Calu3 (cell line): ENCODE measurements at regions of chr7 and their contacts with region 1.

Region 1: GRCh38 chr7:14717816-14718215 is 184.7 kb downstream of the DGKB start:
- DNase-seq: no peak
- H3K4me3 Mint-ChIP-seq: no peak overlapping the region
- H3K27ac Mint-ChIP-seq: peak overlapping the region; percentile 15
- H3K4me1 Mint-ChIP-seq: peaks cover 53% of the 10 kb centered on the region
- H3K27me3 Mint-ChIP-seq: no peaks in the 10 kb centered on the region
- CTCF ChIP-seq: peak; percentile 49

Region 2: DNA sequence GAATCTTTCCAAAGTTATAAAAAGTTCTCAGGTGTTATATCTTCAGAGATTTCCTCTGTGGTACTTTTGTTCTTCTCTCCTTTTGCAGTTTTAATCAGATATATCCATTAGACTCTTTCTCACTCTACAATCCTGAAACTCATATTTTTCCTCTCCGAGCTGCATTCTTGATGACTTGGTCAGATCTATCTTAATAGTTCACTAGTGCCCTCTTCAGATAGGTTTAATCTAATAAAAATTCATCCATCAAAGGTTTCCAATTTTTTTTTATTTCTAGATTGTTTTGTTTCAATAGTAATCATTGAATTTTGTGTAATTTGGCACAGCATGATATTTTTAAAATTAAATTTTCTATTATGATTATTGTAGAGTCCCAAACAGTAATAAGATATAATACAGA is 206.6 kb after region 1 on chr7:
- CTCF ChIA-PET with region 1: interaction called, 16 read pairs
- intact Hi-C with region 1: loop called (anchors 1 kb)
- DNase-seq: no peak
- H3K4me3 Mint-ChIP-seq: no peak overlapping the region
- H3K27ac Mint-ChIP-seq: peak overlapping the region; percentile 14
- H3K4me1 Mint-ChIP-seq: no peaks in the 10 kb centered on the region
- H3K27me3 Mint-ChIP-seq: no peaks in the 10 kb centered on the region
- CTCF ChIP-seq: no peak

Region 3: GRCh38 chr7:15068324-15068723 is 350.5 kb after region 1 on chr7:
- CTCF ChIA-PET with region 1: no interaction called
- intact Hi-C with region 1: no loop called
- DNase-seq: no peak
- H3K4me3 Mint-ChIP-seq: no peak overlapping the region
- H3K27ac Mint-ChIP-seq: no peak overlapping the region
- H3K4me1 Mint-ChIP-seq: peaks cover 19% of the 10 kb centered on the region
- H3K27me3 Mint-ChIP-seq: no peaks in the 10 kb centered on the region
- CTCF ChIP-seq: no peak

Region 4: GRCh38 chr7:15130666-15131541 is 413.1 kb after region 1 on chr7:
- CTCF ChIA-PET with region 1: no interaction called
- intact Hi-C with region 1: loop called (anchors 2 kb)
- DNase-seq: no peak
- H3K4me3 Mint-ChIP-seq: no peak overlapping the region
- H3K27ac Mint-ChIP-seq: peak overlapping the region; percentile 21
- H3K4me1 Mint-ChIP-seq: peaks cover 8% of the 10 kb centered on the region
- H3K27me3 Mint-ChIP-seq: no peaks in the 10 kb centered on the region
- CTCF ChIP-seq: no peak

Region 5: DNA sequence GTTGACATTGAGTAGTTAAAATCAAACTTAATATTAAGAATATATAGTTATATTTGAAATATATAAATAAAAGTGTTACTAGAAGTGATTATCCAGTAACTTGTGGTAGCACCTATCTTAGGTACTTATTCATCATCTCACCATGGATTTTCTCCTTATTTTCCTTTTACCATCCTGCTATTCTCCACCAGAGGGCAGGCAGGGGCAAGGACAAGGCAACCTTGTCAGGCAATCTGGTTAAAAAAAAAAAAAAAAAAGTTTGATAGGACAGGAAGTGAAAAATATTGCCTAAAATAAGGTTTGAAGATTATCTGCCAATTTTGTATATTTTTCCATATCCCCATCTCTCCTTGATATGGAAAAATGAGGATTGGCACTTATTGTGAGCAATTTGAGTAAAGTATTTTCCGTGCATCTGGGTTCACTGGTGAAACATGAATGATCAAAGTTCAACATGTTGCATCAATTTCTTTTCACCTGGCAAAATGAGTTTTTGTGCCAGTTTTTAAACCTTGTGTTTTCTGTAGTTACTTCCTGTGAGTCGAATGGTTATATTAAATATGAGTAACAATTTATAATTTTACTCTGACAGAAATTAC is 587.3 kb after region 1 on chr7:
- CTCF ChIA-PET with region 1: no interaction called
- intact Hi-C with region 1: loop called (anchors 10 kb)
- DNase-seq: peak; percentile 78
- H3K4me3 Mint-ChIP-seq: no peak overlapping the region
- H3K27ac Mint-ChIP-seq: no peak overlapping the region
- H3K4me1 Mint-ChIP-seq: no peaks in the 10 kb centered on the region
- H3K27me3 Mint-ChIP-seq: no peaks in the 10 kb centered on the region
- CTCF ChIP-seq: peak; percentile 68

Region 6: GRCh38 chr7:16062269-16062668 is 1344.5 kb after region 1 on chr7:
- CTCF ChIA-PET with region 1: no interaction called
- intact Hi-C with region 1: loop called (anchors 10 kb)
- DNase-seq: no peak
- H3K4me3 Mint-ChIP-seq: no peak overlapping the region
- H3K27ac Mint-ChIP-seq: no peak overlapping the region
- H3K4me1 Mint-ChIP-seq: peaks cover 23% of the 10 kb centered on the region
- H3K27me3 Mint-ChIP-seq: no peaks in the 10 kb centered on the region
- CTCF ChIP-seq: no peak